Colonic mucosa (tissue), 4 donors: ENCODE measurements at regions of chr7 and their contacts with region 1.

Region 1: DNA sequence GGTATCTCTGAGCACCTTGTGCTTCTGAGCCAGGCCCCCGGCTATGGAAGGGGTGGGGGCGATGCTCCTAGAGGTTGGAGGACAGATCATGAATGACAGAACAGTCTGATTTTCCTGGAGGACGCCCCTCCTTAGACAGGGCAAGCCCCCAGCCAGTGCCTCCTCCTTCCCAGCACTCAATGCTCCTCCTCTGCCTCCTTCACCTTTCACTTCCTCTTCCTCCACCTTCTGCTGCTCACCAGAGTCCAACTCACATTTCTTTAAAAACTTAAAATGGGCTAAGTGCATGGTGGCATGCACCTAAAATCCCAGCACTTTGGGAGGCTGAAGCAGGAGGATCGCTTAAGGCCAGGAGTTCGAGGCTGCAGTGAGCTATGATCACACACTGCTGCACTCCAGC is 71.1 kb upstream of the CUX1 start:
- DNase-seq: no peak
- H3K4me3 ChIP-seq: no peak overlapping the region
- H3K27ac ChIP-seq: no peak overlapping the region
- H3K4me1 ChIP-seq: no peaks in the 10 kb centered on the region
- H3K27me3 ChIP-seq: no peaks in the 10 kb centered on the region
- CTCF ChIP-seq: no peak

Region 2: GRCh38 chr7:101363734-101364374 is 382.5 kb before region 1 on chr7:
- intact Hi-C with region 1: no loop called
- DNase-seq: peak; percentile 48
- H3K4me3 ChIP-seq: peak overlapping the region; percentile 30
- H3K27ac ChIP-seq: no peak overlapping the region
- H3K4me1 ChIP-seq: no peaks in the 10 kb centered on the region
- H3K27me3 ChIP-seq: peaks cover 24% of the 10 kb centered on the region
- CTCF ChIP-seq: peak; percentile 95

Region 3: GRCh38 chr7:101767544-101767943 is 21.2 kb after region 1 on chr7:
- intact Hi-C with region 1: no loop called
- DNase-seq: no peak
- H3K4me3 ChIP-seq: no peak overlapping the region
- H3K27ac ChIP-seq: no peak overlapping the region
- H3K4me1 ChIP-seq: no peaks in the 10 kb centered on the region
- H3K27me3 ChIP-seq: no peaks in the 10 kb centered on the region
- CTCF ChIP-seq: no peak

Region 4: DNA sequence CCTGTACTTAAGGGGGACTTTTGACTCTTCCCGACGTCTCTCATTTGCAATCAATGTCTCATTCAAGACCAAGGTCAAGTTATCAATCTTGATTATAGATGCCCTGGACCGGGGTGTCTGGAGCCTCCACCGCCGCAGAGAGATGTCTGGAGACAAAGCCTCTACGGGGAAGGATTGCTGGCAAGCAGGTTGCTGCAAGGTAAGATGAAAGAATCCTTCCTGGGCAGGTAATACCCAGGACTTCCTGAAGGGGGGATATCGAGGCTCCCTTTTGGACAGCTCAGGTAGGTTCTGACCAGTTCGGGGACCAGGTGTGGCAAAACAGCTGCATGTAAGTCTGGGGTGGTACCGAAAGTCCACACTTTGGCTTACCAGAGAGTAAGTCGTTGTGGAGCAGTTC is 58.7 kb after region 1 on chr7:
- intact Hi-C with region 1: loop called (anchors 5 kb)
- DNase-seq: peak; percentile 46
- H3K4me3 ChIP-seq: no peak overlapping the region
- H3K27ac ChIP-seq: no peak overlapping the region
- H3K4me1 ChIP-seq: no peaks in the 10 kb centered on the region
- H3K27me3 ChIP-seq: no peaks in the 10 kb centered on the region
- CTCF ChIP-seq: peak; percentile 41

Region 5: GRCh38 chr7:101950434-101951119 is 204.3 kb after region 1 on chr7:
- intact Hi-C with region 1: no loop called
- DNase-seq: no peak
- H3K4me3 ChIP-seq: no peak overlapping the region
- H3K27ac ChIP-seq: no peak overlapping the region
- H3K4me1 ChIP-seq: no peaks in the 10 kb centered on the region
- H3K27me3 ChIP-seq: no peaks in the 10 kb centered on the region
- CTCF ChIP-seq: no peak